ENCODE measurements at regions of chr6 and their contacts with region 1.

Region 1: GRCh38 chr6:86331265-86331840 is 606.0 kb upstream of the HTR1E start:
- DNase-seq: no peak
- H3K4me3 ChIP-seq: no peak overlapping the region
- H3K27ac ChIP-seq: no peak overlapping the region
- H3K4me1 ChIP-seq: no peaks in the 10 kb centered on the region
- H3K27me3 ChIP-seq: no peaks in the 10 kb centered on the region
- CTCF ChIP-seq: no peak
- POLR2A ChIP-seq: no peak

Region 2: DNA sequence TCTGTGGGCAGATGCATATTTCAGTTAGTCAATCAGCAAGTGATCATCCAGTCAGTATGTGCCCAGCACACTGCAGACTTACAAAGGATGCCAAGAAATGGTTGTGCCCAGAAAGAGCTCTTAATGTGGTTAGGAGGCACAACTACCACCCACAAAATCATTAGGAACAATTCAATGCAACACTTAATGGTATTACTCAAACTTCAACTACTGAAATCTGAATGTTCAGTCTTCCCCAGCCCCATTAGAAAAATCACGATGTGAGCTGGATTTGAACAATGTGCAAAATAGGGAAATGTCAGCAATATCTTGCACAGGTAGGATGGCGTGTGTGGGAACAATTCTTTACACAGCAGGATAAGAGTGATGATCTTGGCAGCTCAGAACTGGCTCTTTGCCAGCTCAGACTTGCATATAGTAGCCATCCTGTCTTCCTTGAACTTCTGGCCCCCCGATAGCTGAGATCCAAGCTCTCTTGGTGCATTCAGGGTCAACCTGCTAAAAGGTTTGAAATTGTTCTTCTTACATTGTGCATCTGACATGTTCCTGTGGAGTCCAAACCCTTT is 49.3 kb after region 1 on chr6:
- intact Hi-C with region 1: loop called (anchors 2 kb)
- DNase-seq: no peak
- H3K4me3 ChIP-seq: no peak overlapping the region
- H3K27ac ChIP-seq: no peak overlapping the region
- H3K4me1 ChIP-seq: no peaks in the 10 kb centered on the region
- H3K27me3 ChIP-seq: no peaks in the 10 kb centered on the region
- CTCF ChIP-seq: no peak
- POLR2A ChIP-seq: no peak

Measured in breast epithelium (tissue), 4 donors.